Activated CD4-positive, alpha-beta T cell treated with anti-CD3 and anti-CD28 coated beads for 36 hours (primary cell): ENCODE measurements at regions of chr5 and their contacts with region 1.

Region 1: DNA sequence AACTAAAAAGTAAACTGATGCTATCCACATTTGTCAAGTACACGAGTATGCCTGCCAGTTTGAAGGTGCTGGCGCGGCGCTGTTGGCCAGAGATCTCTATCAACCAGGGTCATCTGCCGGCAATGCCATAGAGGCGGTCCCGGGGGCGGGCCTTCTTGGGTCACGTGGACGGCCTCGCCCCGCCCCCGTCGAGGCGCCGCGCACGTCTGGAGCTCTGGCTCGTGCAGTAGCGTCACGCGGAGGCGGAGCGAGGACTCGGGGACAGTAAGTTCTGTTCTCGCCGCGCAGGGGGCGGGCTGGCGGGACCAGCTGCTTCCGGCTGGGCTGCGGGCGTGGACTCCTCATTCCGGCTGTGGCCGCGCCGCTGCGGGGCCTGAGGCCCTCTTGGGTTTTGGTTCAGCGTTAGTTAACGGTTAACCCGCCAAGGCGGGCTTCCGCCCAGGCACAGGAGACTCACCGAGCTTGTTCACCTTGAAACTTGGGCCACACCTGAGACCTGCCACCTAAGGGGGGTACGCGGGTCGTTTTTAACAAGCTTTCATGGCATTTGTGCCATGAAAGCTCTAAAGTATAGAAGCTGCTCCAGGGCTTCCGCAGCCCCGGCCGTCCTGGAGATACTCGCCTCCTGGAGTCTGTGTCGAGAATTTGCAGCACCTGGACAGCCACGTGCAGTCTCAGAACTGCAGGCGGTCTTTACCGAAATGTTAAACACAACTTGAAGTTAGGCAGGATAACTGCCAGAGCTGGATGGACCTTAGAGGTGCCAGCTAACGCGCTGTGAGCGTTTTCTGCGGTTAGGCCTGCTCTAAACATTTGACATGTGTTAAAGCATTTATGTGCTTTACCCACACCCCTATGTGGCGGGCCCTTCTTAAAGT is at the start of gene RFESD:
- DNase-seq: peak; percentile 98
- ATAC-seq: peak; percentile 92
- H3K4me3 Mint-ChIP-seq: peak within 1 kb of the TSS; percentile 79
- H3K27ac Mint-ChIP-seq: peak within 1 kb of the TSS; percentile 87
- H3K4me1 Mint-ChIP-seq: peaks cover 42% of the 10 kb centered on the region
- H3K27me3 Mint-ChIP-seq: no peaks in the 10 kb centered on the region
- total RNA-seq, gene RFESD: 4.1 to 9.2 TPM

Region 2: GRCh38 chr5:95352691-95353090 is 294.1 kb before region 1 on chr5:
- CTCF ChIA-PET with region 1: no interaction called
- POLR2A ChIA-PET with region 1: no interaction called
- intact Hi-C with region 1: no loop called
- DNase-seq: no peak
- ATAC-seq: no peak
- H3K4me3 Mint-ChIP-seq: no peak overlapping the region
- H3K27ac Mint-ChIP-seq: no peak overlapping the region
- H3K4me1 Mint-ChIP-seq: no peaks in the 10 kb centered on the region
- H3K27me3 Mint-ChIP-seq: no peaks in the 10 kb centered on the region

Region 3: GRCh38 chr5:95591490-95591901 is 55.3 kb before region 1 on chr5:
- CTCF ChIA-PET with region 1: no interaction called
- POLR2A ChIA-PET with region 1: no interaction called
- intact Hi-C with region 1: loop called in 1 of 2 experiments (anchors 1 kb)
- DNase-seq: no peak
- ATAC-seq: peak; percentile 95
- H3K4me3 Mint-ChIP-seq: no peak overlapping the region
- H3K27ac Mint-ChIP-seq: peak overlapping the region; percentile 62
- H3K4me1 Mint-ChIP-seq: peaks cover 30% of the 10 kb centered on the region
- H3K27me3 Mint-ChIP-seq: no peaks in the 10 kb centered on the region

Region 4: GRCh38 chr5:95664204-95664786 is 17.5 kb after region 1 on chr5:
- CTCF ChIA-PET with region 1: interaction called, 12 read pairs
- POLR2A ChIA-PET with region 1: no interaction called
- intact Hi-C with region 1: no loop called
- DNase-seq: peak; percentile 54
- ATAC-seq: no peak
- H3K4me3 Mint-ChIP-seq: no peak overlapping the region
- H3K27ac Mint-ChIP-seq: no peak overlapping the region
- H3K4me1 Mint-ChIP-seq: no peaks in the 10 kb centered on the region
- H3K27me3 Mint-ChIP-seq: no peaks in the 10 kb centered on the region

Region 5: GRCh38 chr5:95760273-95761191 is 113.7 kb after region 1 on chr5:
- CTCF ChIA-PET with region 1: interaction called, 6 read pairs
- POLR2A ChIA-PET with region 1: no interaction called
- intact Hi-C with region 1: loop called (anchors 2 kb)
- DNase-seq: peak; percentile 29
- ATAC-seq: peak; percentile 91
- H3K4me3 Mint-ChIP-seq: peak overlapping the region; percentile 52
- H3K27ac Mint-ChIP-seq: peak overlapping the region; percentile 69
- H3K4me1 Mint-ChIP-seq: peaks cover 27% of the 10 kb centered on the region
- H3K27me3 Mint-ChIP-seq: no peaks in the 10 kb centered on the region

Region 6: GRCh38 chr5:95835682-95836385 is 189.0 kb after region 1 on chr5:
- CTCF ChIA-PET with region 1: interaction called, 3 read pairs
- POLR2A ChIA-PET with region 1: no interaction called
- intact Hi-C with region 1: loop called in 1 of 2 experiments (anchors 2 kb)
- DNase-seq: peak; percentile 49
- ATAC-seq: no peak
- H3K4me3 Mint-ChIP-seq: peak overlapping the region; percentile 79
- H3K27ac Mint-ChIP-seq: peak overlapping the region; percentile 91
- H3K4me1 Mint-ChIP-seq: peaks cover 44% of the 10 kb centered on the region
- H3K27me3 Mint-ChIP-seq: no peaks in the 10 kb centered on the region

Region 7: GRCh38 chr5:96049398-96050272 is 402.8 kb after region 1 on chr5:
- CTCF ChIA-PET with region 1: no interaction called
- POLR2A ChIA-PET with region 1: no interaction called
- intact Hi-C with region 1: no loop called
- DNase-seq: no peak
- ATAC-seq: no peak
- H3K4me3 Mint-ChIP-seq: no peak overlapping the region
- H3K27ac Mint-ChIP-seq: no peak overlapping the region
- H3K4me1 Mint-ChIP-seq: peaks cover 8% of the 10 kb centered on the region
- H3K27me3 Mint-ChIP-seq: peaks cover 9% of the 10 kb centered on the region

Region 8: GRCh38 chr5:96279801-96280542 is 633.2 kb after region 1 on chr5:
- CTCF ChIA-PET with region 1: no interaction called
- POLR2A ChIA-PET with region 1: no interaction called
- intact Hi-C with region 1: loop called in 1 of 2 experiments (anchors 5 kb)
- DNase-seq: peak; percentile 48
- ATAC-seq: peak; percentile 96
- H3K4me3 Mint-ChIP-seq: no peak overlapping the region
- H3K27ac Mint-ChIP-seq: peak overlapping the region; percentile 35
- H3K4me1 Mint-ChIP-seq: peaks cover 23% of the 10 kb centered on the region
- H3K27me3 Mint-ChIP-seq: peaks cover 30% of the 10 kb centered on the region

Region 9: DNA sequence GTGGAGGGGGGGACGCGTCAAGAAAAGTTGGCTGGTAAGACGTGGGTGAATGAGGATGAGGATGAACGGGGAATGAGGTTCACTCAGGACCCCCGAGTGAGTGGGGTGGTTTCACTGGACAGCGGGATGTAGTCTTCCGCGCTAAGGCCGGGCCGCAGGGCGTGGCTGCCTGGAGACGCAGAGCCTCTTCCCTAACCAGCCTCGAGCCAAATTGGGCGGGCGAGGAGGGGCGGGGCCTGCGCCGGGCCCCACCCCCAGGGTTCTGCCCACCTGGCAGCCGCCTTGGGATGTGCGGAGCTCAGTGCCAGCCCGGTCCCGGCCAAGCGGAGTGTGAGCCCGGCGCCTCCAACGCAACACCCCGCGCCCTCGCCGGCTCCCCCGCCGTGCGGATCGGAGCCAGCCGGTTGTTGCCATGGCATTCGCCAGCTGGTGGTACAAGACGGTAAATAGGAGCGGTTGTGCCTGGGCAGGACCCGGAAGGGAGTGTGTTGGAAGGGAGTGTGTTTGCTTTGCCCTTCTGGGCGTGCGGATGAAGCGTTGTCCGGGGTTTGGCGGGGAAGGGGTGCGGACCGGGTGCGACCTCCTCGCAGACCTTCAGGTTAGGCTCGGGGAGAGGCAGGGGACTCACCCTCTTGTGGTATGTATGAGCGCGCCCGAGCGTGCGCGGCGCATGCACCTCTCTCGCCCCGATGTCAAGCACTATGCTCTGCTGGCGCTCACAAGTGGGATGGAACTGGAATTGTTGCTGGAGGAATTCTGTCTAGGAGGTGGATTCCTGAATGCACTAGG is 1016.1 kb after region 1 on chr5:
- CTCF ChIA-PET with region 1: no interaction called
- POLR2A ChIA-PET with region 1: interaction called, 4 read pairs
- intact Hi-C with region 1: loop called in 1 of 2 experiments (anchors 1 kb)
- DNase-seq: peak; percentile 92
- ATAC-seq: peak; percentile 80
- H3K4me3 Mint-ChIP-seq: peak overlapping the region; percentile 89
- H3K27ac Mint-ChIP-seq: peak overlapping the region; percentile 95
- H3K4me1 Mint-ChIP-seq: peaks cover 32% of the 10 kb centered on the region
- H3K27me3 Mint-ChIP-seq: peaks cover 6% of the 10 kb centered on the region